WTC11 (cell line): ENCODE measurements at regions of chr22 and their contacts with region 1.

Region 1: DNA sequence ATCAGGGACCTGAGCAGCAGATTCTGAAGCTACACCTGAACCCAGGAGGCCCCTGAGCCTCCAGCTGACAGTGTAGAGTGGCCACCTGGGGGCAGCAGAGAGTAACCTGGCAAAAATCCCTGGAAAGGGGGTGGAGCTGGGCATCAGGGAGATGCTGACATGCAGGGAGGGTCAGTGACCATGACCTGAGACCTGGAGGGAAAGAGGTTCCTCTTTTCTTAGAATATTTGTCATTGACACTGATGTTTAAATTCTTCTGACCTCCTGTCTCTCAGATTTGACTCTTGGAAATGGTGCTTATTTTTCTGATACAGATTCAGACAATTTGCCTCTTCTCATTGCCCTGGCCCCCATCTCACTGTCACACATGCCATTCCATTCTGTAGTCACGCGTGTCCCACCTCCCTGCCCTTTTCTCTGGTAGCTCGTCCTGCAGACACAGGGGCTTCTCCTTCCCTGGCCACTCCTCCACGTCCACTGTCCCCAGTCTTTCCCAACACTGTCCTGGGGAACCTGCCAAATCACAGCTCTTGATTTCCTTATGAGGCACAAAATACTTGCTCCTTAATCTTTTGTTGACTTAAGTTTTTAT is 117.2 kb upstream of the IGLL5 start:
- DNase-seq: peak; percentile 84
- ATAC-seq: peak; percentile 88
- H3K4me3 Mint-ChIP-seq: no peak overlapping the region
- H3K27ac Mint-ChIP-seq: no peak overlapping the region
- H3K4me1 Mint-ChIP-seq: no peaks in the 10 kb centered on the region
- H3K27me3 Mint-ChIP-seq: peaks cover 99% of the 10 kb centered on the region
- CTCF ChIP-seq: peak; percentile 73; the same call in 1 of the 2 replicates

Region 2: DNA sequence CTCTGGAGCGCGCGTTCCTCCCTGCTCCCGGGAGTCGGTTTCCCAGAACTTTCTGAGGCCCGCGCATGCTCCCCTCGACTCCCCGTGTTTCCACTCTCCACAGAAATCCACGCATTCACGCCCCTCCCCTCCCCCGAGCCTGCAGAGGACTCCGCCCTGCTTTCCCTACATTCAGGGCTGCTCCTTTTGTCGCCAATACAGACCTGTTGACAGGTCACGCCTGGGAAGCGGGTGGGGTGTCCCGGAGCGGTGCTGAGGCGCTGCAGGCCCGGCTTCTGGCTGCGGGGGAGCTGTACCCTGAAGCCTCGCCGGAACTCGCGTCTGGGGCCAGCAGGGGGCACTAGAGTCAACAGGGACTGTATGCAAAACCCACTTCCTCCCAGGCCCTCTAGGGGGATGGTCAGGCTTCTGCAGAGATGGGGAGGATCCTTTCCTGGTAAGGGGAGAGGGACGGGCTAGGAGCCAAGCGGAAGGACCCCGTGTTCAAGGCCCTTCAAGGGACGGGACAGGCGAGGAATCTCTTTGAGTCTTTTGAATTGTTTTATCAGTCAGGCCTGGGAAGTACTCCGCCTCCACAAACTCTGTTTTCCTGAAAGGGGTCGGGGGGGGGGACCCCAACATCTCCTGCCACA is 211.3 kb before region 1 on chr22 and contains the start of gene PRAME:
- CTCF ChIA-PET with region 1: no interaction called
- POLR2A ChIA-PET with region 1: no interaction called
- DNase-seq: peak; percentile 93
- ATAC-seq: peak; percentile 97
- H3K4me3 Mint-ChIP-seq: no peak within 1 kb of the TSS
- H3K27ac Mint-ChIP-seq: no peak within 1 kb of the TSS
- H3K4me1 Mint-ChIP-seq: no peaks in the 10 kb centered on the region
- H3K27me3 Mint-ChIP-seq: peaks cover 79% of the 10 kb centered on the region
- CTCF ChIP-seq: peak; percentile 89
- total RNA-seq, gene PRAME: 1.4 to 1.7 TPM (median 1.5 TPM) in 3 replicates

Region 3: GRCh38 chr22:22733881-22734373 is 36.4 kb before region 1 on chr22:
- CTCF ChIA-PET with region 1: interaction called, 12 read pairs
- POLR2A ChIA-PET with region 1: no interaction called
- DNase-seq: no peak
- ATAC-seq: no peak
- H3K4me3 Mint-ChIP-seq: no peak overlapping the region
- H3K27ac Mint-ChIP-seq: no peak overlapping the region
- H3K4me1 Mint-ChIP-seq: peaks cover 13% of the 10 kb centered on the region
- H3K27me3 Mint-ChIP-seq: peaks cover 98% of the 10 kb centered on the region
- CTCF ChIP-seq: no peak

Region 4: GRCh38 chr22:22753526-22754267 is 16.7 kb before region 1 on chr22:
- CTCF ChIA-PET with region 1: interaction called, 108 read pairs
- POLR2A ChIA-PET with region 1: no interaction called
- DNase-seq: peak; percentile 83
- ATAC-seq: peak; percentile 97
- H3K4me3 Mint-ChIP-seq: no peak overlapping the region
- H3K27ac Mint-ChIP-seq: no peak overlapping the region
- H3K4me1 Mint-ChIP-seq: no peaks in the 10 kb centered on the region
- H3K27me3 Mint-ChIP-seq: peaks cover 96% of the 10 kb centered on the region
- CTCF ChIP-seq: peak; percentile 33; the same call in 1 of the 2 replicates

Region 5: DNA sequence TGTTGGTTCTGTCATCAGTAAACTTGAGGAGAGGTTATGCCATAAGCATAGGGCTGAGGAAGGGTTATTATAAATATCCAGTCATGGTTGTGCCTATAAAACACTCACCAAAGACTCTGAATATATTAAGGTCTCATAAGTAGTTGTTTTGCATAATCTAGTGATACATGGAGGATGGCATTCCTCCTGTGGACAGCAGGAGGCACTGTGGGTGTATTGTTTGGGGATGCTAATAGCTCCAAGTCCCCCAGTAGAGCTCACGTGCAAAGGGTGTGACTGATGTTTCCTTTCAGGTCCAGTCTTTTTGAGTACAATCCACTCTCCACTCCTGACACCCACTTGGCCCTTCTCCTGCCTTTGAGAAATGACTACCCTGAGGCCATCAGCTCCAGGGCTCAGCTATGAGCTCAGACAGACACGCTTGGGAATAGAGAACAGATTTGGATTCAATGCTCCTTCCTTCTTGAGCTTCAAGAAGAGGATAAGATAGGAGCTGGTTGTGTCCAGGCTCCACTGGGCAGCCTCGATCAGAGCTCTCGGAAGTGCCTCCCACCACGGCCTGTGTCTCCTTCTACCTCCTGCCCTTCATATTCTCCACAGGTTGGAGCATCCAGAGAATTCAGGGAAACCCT is 32.1 kb after region 1 on chr22:
- CTCF ChIA-PET with region 1: interaction called, 15 read pairs
- POLR2A ChIA-PET with region 1: no interaction called
- DNase-seq: no peak
- ATAC-seq: peak; percentile 62
- H3K4me3 Mint-ChIP-seq: no peak overlapping the region
- H3K27ac Mint-ChIP-seq: no peak overlapping the region
- H3K4me1 Mint-ChIP-seq: peaks cover 5% of the 10 kb centered on the region; the same call in 1 of the 2 replicates
- H3K27me3 Mint-ChIP-seq: peaks cover 94% of the 10 kb centered on the region
- CTCF ChIP-seq: no peak

Region 6: DNA sequence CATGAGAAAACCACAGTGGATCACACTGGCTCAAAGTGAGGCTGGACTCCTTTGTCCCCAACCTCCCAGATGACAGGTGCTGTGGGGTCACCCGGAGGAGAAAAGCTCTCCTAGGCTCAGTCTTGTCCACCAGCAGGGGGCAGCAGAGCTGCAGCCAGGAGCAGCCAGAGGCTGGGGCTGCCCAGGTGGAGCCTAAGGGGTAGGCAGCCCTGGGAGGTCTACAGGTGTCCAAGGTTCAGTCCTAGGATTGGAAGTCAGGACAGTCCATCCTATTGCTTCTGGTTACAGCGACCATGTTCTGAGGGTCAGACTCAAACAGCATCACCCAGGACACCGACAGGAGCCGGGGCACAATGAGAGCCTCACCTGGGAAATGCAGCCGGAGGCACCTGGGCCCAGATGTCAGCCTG is 39.6 kb after region 1 on chr22:
- CTCF ChIA-PET with region 1: interaction called, 16 read pairs
- POLR2A ChIA-PET with region 1: no interaction called
- DNase-seq: peak; percentile 68
- ATAC-seq: peak; percentile 91
- H3K4me3 Mint-ChIP-seq: no peak overlapping the region
- H3K27ac Mint-ChIP-seq: no peak overlapping the region
- H3K4me1 Mint-ChIP-seq: no peaks in the 10 kb centered on the region
- H3K27me3 Mint-ChIP-seq: peaks cover 84% of the 10 kb centered on the region
- CTCF ChIP-seq: peak; percentile 66; the same call in 1 of the 2 replicates

Region 7: GRCh38 chr22:22877523-22878210 is 107.3 kb after region 1 on chr22:
- CTCF ChIA-PET with region 1: interaction called, 12 read pairs
- POLR2A ChIA-PET with region 1: no interaction called
- DNase-seq: peak; percentile 85
- ATAC-seq: peak; percentile 83
- H3K4me3 Mint-ChIP-seq: no peak overlapping the region
- H3K27ac Mint-ChIP-seq: no peak overlapping the region
- H3K4me1 Mint-ChIP-seq: no peaks in the 10 kb centered on the region
- H3K27me3 Mint-ChIP-seq: peaks cover 79% of the 10 kb centered on the region
- CTCF ChIP-seq: peak; percentile 78